Activated naive CD4-positive, alpha-beta T cell treated with anti-CD3 and anti-CD28 coated beads, Interleukin-2, amount 10 ng/mL, durations not matched to agents 7 days and 5 days (primary cell): ENCODE measurements at regions of chr1 and their contacts with region 1.

Region 1: GRCh38 chr1:234309598-234310459 is 63.4 kb upstream of the COA6 start:
- DNase-seq: peak; percentile 80
- H3K4me3 Mint-ChIP-seq: no peak overlapping the region
- H3K27ac Mint-ChIP-seq: no peak overlapping the region
- H3K4me1 Mint-ChIP-seq: peaks cover 6% of the 10 kb centered on the region
- H3K27me3 Mint-ChIP-seq: peaks cover 4% of the 10 kb centered on the region

Region 2: GRCh38 chr1:234125283-234125682 is 184.5 kb before region 1 on chr1:
- CTCF ChIA-PET with region 1: interaction called, 78 read pairs
- DNase-seq: peak; percentile 70
- H3K4me3 Mint-ChIP-seq: no peak overlapping the region
- H3K27ac Mint-ChIP-seq: no peak overlapping the region
- H3K4me1 Mint-ChIP-seq: no peaks in the 10 kb centered on the region
- H3K27me3 Mint-ChIP-seq: peaks cover 24% of the 10 kb centered on the region

Region 3: DNA sequence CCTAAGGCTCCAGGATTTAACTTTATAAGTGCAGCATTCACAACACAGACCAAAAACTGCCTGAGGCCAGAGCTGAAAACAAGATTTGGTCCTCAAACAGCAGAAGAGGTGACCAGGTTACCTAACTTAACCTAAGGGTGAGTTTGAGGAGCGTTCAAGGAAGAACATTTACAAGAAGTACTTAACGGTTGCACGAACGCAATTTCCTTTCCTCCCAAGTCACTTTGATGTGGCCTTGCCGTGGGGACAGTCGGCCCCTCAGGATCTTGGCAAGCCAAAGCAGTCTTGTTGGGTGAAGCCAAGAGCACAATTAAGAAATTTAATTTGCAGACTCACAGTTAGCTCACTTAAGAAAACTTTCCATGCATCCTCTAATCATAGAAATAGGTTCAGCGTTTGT is 139.2 kb before region 1 on chr1:
- CTCF ChIA-PET with region 1: interaction called, 14 read pairs
- DNase-seq: peak; percentile 63
- H3K4me3 Mint-ChIP-seq: peak overlapping the region; percentile 43
- H3K27ac Mint-ChIP-seq: peak overlapping the region; percentile 92
- H3K4me1 Mint-ChIP-seq: peaks cover 60% of the 10 kb centered on the region
- H3K27me3 Mint-ChIP-seq: peaks cover 14% of the 10 kb centered on the region

Region 4: GRCh38 chr1:234212764-234213657 is 96.8 kb before region 1 on chr1:
- CTCF ChIA-PET with region 1: interaction called, 169 read pairs
- DNase-seq: peak; percentile 53
- H3K4me3 Mint-ChIP-seq: peak overlapping the region; percentile 81
- H3K27ac Mint-ChIP-seq: peak overlapping the region; percentile 77
- H3K4me1 Mint-ChIP-seq: peaks cover 43% of the 10 kb centered on the region
- H3K27me3 Mint-ChIP-seq: peaks cover 43% of the 10 kb centered on the region

Region 5: DNA sequence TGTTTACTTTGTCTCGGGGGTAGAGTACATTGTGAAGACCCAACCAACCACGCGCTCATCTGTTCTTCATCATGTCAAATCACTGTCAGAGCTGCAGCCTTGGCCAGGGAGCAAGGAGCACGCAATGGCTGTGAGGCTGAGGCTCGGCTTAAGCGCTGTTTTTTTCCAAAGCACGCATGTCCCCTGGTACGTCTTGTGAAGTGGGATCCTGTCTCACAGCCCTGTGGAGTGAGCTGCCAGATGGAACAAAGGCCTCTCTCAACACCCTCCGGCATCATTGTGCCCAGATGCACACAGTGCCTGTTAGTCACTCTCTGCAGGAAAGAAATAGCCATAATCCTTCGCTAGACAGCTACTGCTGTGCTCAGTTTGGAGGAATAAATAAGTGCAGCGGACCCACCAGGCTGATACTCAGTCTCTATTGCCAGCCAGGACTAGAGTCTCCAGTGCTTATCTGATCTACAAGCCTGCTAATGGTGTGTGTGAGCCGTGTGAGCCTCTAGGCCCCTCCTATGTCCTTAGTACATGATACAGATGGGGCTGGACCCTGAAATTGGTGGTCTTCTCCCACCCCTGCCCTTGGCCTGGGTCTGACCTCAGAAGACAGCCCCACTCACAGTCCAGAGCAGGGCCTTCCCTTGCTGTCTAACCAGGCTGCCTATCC is 27.9 kb before region 1 on chr1:
- CTCF ChIA-PET with region 1: interaction called, 12 read pairs
- DNase-seq: no peak
- H3K4me3 Mint-ChIP-seq: no peak overlapping the region
- H3K27ac Mint-ChIP-seq: no peak overlapping the region
- H3K4me1 Mint-ChIP-seq: no peaks in the 10 kb centered on the region
- H3K27me3 Mint-ChIP-seq: no peaks in the 10 kb centered on the region

Region 6: GRCh38 chr1:234573711-234574299 is 264.0 kb after region 1 on chr1:
- CTCF ChIA-PET with region 1: no interaction called
- DNase-seq: no peak
- H3K4me3 Mint-ChIP-seq: no peak overlapping the region
- H3K27ac Mint-ChIP-seq: no peak overlapping the region
- H3K4me1 Mint-ChIP-seq: no peaks in the 10 kb centered on the region
- H3K27me3 Mint-ChIP-seq: peaks cover 17% of the 10 kb centered on the region